Cardiac septum (tissue), 1 donor: ENCODE measurements at regions of chr1 and their contacts with region 1.

Region 1: DNA sequence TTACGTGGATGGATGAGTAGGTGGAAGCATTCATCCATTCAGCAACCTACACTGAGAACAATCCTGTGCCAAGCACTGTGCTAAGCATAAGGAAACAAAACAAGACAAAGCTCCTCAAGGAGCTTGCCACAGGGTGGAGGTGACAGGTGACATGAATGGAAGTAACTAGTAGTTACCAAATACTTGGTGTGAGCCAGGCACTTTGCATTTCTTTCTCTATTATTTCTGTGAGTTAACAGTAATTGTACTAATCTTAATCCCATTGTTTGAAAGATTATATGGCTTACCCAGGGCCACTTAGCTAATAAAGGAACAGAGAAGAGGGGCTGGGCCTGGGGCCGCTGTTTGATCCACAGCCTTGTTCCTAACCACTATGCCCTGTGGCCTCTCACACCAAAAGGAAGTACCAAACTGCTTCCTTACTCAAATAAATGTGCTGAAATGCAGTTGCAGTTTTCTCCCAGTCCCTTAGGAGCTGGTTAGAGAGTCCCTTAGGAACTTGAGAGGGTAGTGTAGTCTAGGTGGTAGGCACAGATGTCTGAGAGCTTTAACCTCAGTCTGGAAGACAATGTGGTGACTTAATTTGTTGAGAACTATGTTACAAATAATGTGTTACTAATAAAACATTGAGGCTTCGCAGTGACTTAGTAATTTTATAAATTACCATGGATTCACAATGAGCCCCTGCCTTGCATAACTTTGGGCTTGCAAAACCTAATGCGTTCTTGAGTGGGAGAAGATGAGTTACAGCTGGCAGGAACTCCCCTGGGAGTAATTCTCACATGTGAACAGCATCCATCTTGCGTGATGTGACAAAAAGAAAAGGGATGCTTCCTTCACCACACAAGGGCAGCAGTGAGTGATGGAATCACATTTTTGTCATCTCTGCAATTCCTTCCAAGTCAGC is 69.8 kb downstream of the MPZL1 start:
- DNase-seq: no peak

Region 2: DNA sequence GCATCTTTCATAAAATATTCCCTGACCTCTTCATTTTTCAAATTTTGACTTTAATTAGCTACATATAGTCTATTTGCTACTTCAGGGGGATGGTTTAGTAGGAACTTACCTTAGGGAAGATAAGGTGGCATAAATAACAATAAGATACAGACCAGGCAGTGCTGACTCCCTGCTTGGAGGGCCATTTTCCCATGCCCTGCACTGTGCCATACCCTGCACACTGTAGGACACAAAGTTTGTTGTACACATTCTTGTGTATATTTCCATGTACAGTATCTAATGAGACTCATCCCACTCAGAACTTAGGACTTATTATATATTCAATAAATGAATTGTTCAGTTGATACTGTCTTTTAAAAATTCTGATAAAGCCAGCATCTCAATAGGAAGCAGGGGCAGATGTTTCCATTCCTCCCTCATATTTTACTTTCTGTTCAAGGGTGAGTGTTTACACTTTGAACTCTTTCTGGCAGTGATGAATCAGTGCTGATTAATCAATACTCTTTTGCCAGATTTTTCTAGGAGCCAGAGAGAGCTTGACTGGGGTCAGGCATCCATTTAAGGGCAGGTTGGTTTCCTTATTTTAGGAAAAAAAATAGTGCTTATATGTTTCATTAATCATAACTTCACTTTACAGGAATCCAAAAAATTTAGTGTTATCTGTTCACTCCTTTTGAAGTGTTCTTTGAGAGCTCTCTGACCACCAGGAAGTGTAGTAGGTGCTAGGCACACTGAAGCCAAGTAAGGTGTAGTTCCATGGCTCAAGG is 39.1 kb before region 1 on chr1:
- intact Hi-C with region 1: loop called (anchors 5 kb)
- DNase-seq: no peak

Region 3: GRCh38 chr1:167849666-167850065 is 58.1 kb after region 1 on chr1:
- intact Hi-C with region 1: no loop called
- DNase-seq: no peak